Transverse colon (tissue), 4 donors: ENCODE measurements at regions of chr21 and their contacts with region 1.

Region 1: GRCh38 chr21:29849735-29850176 is 90.0 kb downstream of the GRIK1 start:
- DNase-seq: peak; percentile 22
- H3K4me3 ChIP-seq: no peak overlapping the region
- H3K27ac ChIP-seq: no peak overlapping the region
- H3K4me1 ChIP-seq: no peaks in the 10 kb centered on the region
- H3K27me3 ChIP-seq: no peaks in the 10 kb centered on the region
- CTCF ChIP-seq: peak; percentile 53 to 73 (median 61)
- EP300 ChIP-seq: no peak
- POLR2A ChIP-seq: no peak

Region 2: GRCh38 chr21:28793043-28793442 is 1056.7 kb before region 1 on chr21:
- in situ Hi-C with region 1: no loop called
- intact Hi-C with region 1: no loop called
- DNase-seq: no peak
- H3K4me3 ChIP-seq: no peak overlapping the region
- H3K27ac ChIP-seq: no peak overlapping the region
- H3K4me1 ChIP-seq: no peaks in the 10 kb centered on the region
- H3K27me3 ChIP-seq: no peaks in the 10 kb centered on the region
- CTCF ChIP-seq: peak in 2 of 5 experiments; percentile 13 to 20
- EP300 ChIP-seq: no peak
- POLR2A ChIP-seq: no peak

Region 3: GRCh38 chr21:29114765-29115164 is 735.0 kb before region 1 on chr21:
- in situ Hi-C with region 1: loop called in 3 of 4 experiments (anchors 25 kb)
- intact Hi-C with region 1: no loop called
- DNase-seq: no peak
- H3K4me3 ChIP-seq: no peak overlapping the region
- H3K27ac ChIP-seq: no peak overlapping the region
- H3K4me1 ChIP-seq: no peaks in the 10 kb centered on the region
- H3K27me3 ChIP-seq: no peaks in the 10 kb centered on the region
- CTCF ChIP-seq: no peak
- EP300 ChIP-seq: no peak
- POLR2A ChIP-seq: no peak

Region 4: GRCh38 chr21:29453511-29453910 is 396.2 kb before region 1 on chr21:
- in situ Hi-C with region 1: loop called in 2 of 4 experiments (anchors 25 kb)
- intact Hi-C with region 1: no loop called
- DNase-seq: no peak
- H3K4me3 ChIP-seq: no peak overlapping the region
- H3K27ac ChIP-seq: no peak overlapping the region
- H3K4me1 ChIP-seq: no peaks in the 10 kb centered on the region
- H3K27me3 ChIP-seq: no peaks in the 10 kb centered on the region
- CTCF ChIP-seq: no peak
- EP300 ChIP-seq: no peak
- POLR2A ChIP-seq: no peak

Region 5: DNA sequence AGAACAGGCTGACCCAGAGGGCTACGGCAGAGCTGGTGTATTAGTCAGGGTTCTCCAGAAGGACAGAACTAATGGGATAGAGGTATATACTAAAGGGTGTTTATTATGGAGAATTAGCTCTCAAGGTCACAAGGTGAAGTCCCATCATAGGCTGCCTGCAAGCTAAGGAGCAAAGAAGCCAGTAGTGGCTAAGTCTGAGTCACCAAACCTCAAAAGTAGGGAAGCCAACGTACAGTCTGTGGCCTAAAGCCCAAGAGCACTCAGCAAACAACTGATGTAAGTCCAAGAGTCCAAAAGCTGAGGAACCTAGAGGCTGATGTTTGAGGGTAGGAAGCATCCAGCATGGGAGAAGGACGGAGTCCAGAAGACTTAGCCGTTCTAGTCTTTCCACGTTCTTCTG is 371.8 kb before region 1 on chr21:
- in situ Hi-C with region 1: loop called (anchors 10 to 25 kb)
- intact Hi-C with region 1: no loop called
- DNase-seq: no peak
- H3K4me3 ChIP-seq: no peak overlapping the region
- H3K27ac ChIP-seq: no peak overlapping the region
- H3K4me1 ChIP-seq: no peaks in the 10 kb centered on the region
- H3K27me3 ChIP-seq: no peaks in the 10 kb centered on the region
- CTCF ChIP-seq: no peak
- EP300 ChIP-seq: no peak
- POLR2A ChIP-seq: no peak

Region 6: DNA sequence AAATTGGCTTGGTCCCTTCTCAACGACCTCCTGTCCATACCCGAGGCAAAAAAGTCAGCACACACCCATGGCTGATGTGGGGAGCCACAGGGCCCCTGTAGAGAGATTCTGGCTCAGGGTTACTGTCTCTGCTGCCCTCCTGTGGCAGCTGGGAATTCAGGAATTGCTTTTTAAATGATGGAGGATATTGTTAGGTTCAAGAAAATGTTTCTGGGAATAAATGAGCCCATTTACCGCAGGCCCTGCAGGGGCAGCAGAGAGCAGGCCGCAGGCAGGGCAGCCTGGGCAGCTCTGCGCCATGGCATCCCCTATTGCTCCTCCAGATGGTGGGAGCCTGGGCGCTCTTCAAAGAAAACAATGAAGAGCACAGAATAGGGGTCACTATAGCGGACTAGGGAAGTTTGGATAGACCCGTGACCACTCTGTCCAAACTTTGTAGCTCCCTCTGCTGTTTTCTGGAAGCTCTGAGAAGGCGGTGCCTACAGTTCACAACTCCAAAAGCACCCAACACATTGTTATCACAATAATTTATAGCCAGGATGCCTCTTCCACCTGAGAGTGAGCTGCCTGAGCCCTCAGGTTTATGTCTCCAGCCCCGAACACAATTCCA is 349.9 kb before region 1 on chr21:
- in situ Hi-C with region 1: loop called in 1 of 4 experiments (anchors 25 kb)
- intact Hi-C with region 1: no loop called
- DNase-seq: no peak
- H3K4me3 ChIP-seq: no peak overlapping the region
- H3K27ac ChIP-seq: no peak overlapping the region
- H3K4me1 ChIP-seq: no peaks in the 10 kb centered on the region
- H3K27me3 ChIP-seq: no peaks in the 10 kb centered on the region
- CTCF ChIP-seq: peak in 1 of 5 experiments; percentile 17
- EP300 ChIP-seq: no peak
- POLR2A ChIP-seq: no peak